ENCODE measurements at regions of chr3 and their contacts with region 1.

Region 1: GRCh38 chr3:109081746-109082510 is 36.0 kb downstream of the MORC1 start:
- DNase-seq: peak; percentile 52
- ATAC-seq: peak; percentile 100
- H3K4me3 Mint-ChIP-seq: no peak overlapping the region
- H3K27ac Mint-ChIP-seq: no peak overlapping the region
- H3K4me1 Mint-ChIP-seq: no peaks in the 10 kb centered on the region
- H3K27me3 Mint-ChIP-seq: no peaks in the 10 kb centered on the region
- CTCF ChIP-seq: peak; percentile 70

Region 2: GRCh38 chr3:109071350-109072142 is 10.4 kb before region 1 on chr3:
- CTCF ChIA-PET with region 1: interaction called, 13 read pairs
- POLR2A ChIA-PET with region 1: no interaction called
- DNase-seq: no peak
- ATAC-seq: peak; percentile 76
- H3K4me3 Mint-ChIP-seq: no peak overlapping the region
- H3K27ac Mint-ChIP-seq: no peak overlapping the region
- H3K4me1 Mint-ChIP-seq: peaks cover 10% of the 10 kb centered on the region
- H3K27me3 Mint-ChIP-seq: no peaks in the 10 kb centered on the region
- CTCF ChIP-seq: no peak

Region 3: DNA sequence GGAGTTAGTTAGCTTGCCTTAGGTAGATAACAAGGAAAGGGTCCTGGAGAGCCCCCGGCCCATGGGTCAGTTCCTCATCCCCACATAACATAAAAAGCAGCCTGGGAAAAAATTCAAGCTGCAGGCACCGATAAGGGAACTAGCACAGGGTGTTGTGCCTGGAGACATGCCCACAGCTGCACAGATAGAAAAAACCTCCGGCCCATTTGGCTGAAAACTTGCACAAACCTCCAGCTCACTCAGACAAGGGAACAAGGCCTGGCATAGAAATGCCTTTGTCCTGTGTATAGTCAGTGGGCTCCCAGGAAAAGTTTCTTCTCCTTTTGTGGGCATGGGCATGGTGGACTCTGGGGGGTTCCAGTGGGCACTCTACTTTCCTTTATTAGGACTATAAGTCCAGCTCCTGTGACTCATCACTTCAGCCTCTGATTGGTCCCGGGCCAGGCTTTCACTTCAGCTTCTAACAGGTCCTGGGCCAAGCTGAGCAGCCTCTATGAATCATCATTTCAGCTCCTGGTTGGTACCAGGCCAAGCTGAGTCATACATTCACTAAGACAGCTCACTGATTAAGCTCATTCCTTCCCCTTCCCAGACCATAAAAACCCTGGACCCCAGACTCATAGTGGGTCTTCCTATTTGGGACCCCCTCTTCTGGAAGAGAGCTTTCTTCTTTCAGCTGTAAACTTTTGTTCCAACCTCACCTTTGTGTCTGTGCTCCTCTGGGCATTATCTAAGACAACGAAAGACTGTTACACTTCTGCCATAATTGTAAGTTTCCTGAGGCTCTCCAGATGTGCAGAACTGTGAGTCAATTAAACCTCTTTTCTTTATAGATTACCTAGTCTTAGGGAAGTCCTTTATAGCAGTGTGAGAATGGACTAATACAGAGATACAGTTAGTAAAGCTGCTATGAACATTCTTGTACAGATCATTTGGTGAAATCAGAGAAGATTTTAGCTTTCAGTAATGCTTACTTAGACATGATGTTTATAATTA is 603.5 kb after region 1 on chr3:
- CTCF ChIA-PET with region 1: no interaction called
- POLR2A ChIA-PET with region 1: no interaction called
- DNase-seq: no peak
- ATAC-seq: no peak
- H3K4me3 Mint-ChIP-seq: no peak overlapping the region
- H3K27ac Mint-ChIP-seq: no peak overlapping the region
- H3K4me1 Mint-ChIP-seq: no peaks in the 10 kb centered on the region
- H3K27me3 Mint-ChIP-seq: no peaks in the 10 kb centered on the region
- CTCF ChIP-seq: no peak